IMR-90 (cell line): ENCODE measurements at regions of chr6 and their contacts with region 1.

Region 1: GRCh38 chr6:167907837-167908681 is 81.3 kb downstream of the AFDN start:
- DNase-seq: peak; percentile 28
- ATAC-seq: peak; percentile 72
- H3K4me3 ChIP-seq: no peak overlapping the region
- H3K27ac ChIP-seq: no peak overlapping the region
- H3K4me1 ChIP-seq: no peaks in the 10 kb centered on the region
- H3K27me3 ChIP-seq: no peaks in the 10 kb centered on the region
- CTCF ChIP-seq: peak; percentile 48
- POLR2A ChIP-seq: no peak
- RAD21 ChIP-seq: peak; percentile 58

Region 2: DNA sequence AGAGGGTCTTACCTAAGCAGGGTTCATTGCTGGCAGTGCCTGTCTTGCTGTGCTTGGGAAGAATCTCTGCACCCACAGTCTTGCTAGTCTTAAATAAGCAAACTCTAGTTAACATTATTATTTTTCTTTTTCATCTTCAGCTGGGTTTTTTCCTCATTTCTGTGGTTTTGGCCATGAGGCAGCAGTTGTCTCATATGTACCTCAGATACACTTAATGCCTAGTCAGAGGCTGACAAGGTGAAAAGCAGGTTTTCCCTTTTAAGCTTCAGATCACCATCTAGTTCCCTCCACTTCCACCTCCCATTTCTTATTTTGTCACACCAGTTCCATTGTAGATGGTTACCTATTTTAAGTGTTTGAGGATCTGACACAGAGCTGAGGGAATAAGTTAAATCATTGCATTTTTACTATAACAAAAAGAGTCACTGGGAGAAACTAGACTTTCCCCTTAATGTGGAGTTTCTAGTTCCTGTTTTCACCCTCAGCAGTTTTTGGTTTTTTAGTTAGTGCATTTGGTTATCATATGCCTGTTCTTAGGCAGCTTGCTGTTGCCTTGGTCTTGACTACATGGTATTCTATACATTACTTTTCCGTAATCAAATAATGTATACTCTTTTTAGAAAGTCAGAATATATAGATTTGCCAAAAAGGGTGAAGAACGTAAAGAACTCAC is 35.4 kb before region 1 on chr6:
- CTCF ChIA-PET with region 1: no interaction called
- POLR2A ChIA-PET with region 1: no interaction called
- dilution Hi-C with region 1: no loop called
- in situ Hi-C with region 1: no loop called
- intact Hi-C with region 1: no loop called
- DNase-seq: peak; percentile 47
- ATAC-seq: no peak
- H3K4me3 ChIP-seq: no peak overlapping the region
- H3K27ac ChIP-seq: no peak overlapping the region
- H3K4me1 ChIP-seq: no peaks in the 10 kb centered on the region
- H3K27me3 ChIP-seq: no peaks in the 10 kb centered on the region
- CTCF ChIP-seq: no peak
- POLR2A ChIP-seq: no peak
- RAD21 ChIP-seq: no peak

Region 3: GRCh38 chr6:168050881-168051586 is 143.0 kb after region 1 on chr6:
- CTCF ChIA-PET with region 1: no interaction called
- POLR2A ChIA-PET with region 1: no interaction called
- dilution Hi-C with region 1: no loop called
- in situ Hi-C with region 1: no loop called
- intact Hi-C with region 1: loop called (anchors 5 kb)
- DNase-seq: no peak
- ATAC-seq: no peak
- H3K4me3 ChIP-seq: no peak overlapping the region
- H3K27ac ChIP-seq: no peak overlapping the region
- H3K4me1 ChIP-seq: peaks cover 6% of the 10 kb centered on the region; the same call in 1 of the 2 replicates
- H3K27me3 ChIP-seq: no peaks in the 10 kb centered on the region; the same call in 1 of the 2 replicates
- CTCF ChIP-seq: 0 out of 2 replicates have a peak, but pooled peaks have one; percentile 22
- POLR2A ChIP-seq: no peak
- RAD21 ChIP-seq: peak; percentile 37

Region 4: DNA sequence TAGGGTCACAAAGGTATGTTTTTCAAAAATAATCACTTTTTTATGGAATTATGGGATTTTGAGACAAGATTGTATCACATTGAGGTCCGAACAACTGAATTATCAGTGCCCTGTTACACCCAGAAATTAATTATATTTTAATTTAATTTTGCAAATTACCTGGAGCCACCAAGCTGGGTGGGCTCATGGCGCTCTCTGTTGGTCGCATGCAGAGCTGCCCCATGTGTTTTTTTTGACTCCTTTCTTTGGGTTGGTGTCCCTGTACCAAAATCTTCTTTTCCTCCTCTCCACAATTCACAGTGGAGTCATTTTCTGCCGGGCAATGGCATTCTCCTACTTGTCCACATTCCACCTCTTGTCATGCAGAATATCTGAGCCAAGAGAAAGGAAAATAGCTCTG is 209.9 kb after region 1 on chr6:
- CTCF ChIA-PET with region 1: interaction called, 4 read pairs
- POLR2A ChIA-PET with region 1: no interaction called
- dilution Hi-C with region 1: no loop called
- in situ Hi-C with region 1: no loop called
- intact Hi-C with region 1: loop called (anchors 1 kb)
- DNase-seq: no peak
- ATAC-seq: no peak
- H3K4me3 ChIP-seq: no peak overlapping the region
- H3K27ac ChIP-seq: no peak overlapping the region
- H3K4me1 ChIP-seq: no peaks in the 10 kb centered on the region
- H3K27me3 ChIP-seq: peaks cover 3% of the 10 kb centered on the region; the same call in 1 of the 2 replicates
- CTCF ChIP-seq: peak; percentile 40
- POLR2A ChIP-seq: no peak
- RAD21 ChIP-seq: peak; percentile 32; the same call in 1 of the 2 replicates

Region 5: GRCh38 chr6:168132531-168133167 is 224.6 kb after region 1 on chr6:
- CTCF ChIA-PET with region 1: interaction called, 10 read pairs
- POLR2A ChIA-PET with region 1: no interaction called
- dilution Hi-C with region 1: no loop called
- in situ Hi-C with region 1: no loop called
- intact Hi-C with region 1: loop called (anchors 1 kb)
- DNase-seq: peak; percentile 80
- ATAC-seq: peak; percentile 85
- H3K4me3 ChIP-seq: no peak overlapping the region
- H3K27ac ChIP-seq: no peak overlapping the region
- H3K4me1 ChIP-seq: peaks cover 2% of the 10 kb centered on the region; the same call in 1 of the 2 replicates
- H3K27me3 ChIP-seq: no peaks in the 10 kb centered on the region; the same call in 1 of the 2 replicates
- CTCF ChIP-seq: peak; percentile 41
- POLR2A ChIP-seq: no peak
- RAD21 ChIP-seq: peak; percentile 49

Region 6: DNA sequence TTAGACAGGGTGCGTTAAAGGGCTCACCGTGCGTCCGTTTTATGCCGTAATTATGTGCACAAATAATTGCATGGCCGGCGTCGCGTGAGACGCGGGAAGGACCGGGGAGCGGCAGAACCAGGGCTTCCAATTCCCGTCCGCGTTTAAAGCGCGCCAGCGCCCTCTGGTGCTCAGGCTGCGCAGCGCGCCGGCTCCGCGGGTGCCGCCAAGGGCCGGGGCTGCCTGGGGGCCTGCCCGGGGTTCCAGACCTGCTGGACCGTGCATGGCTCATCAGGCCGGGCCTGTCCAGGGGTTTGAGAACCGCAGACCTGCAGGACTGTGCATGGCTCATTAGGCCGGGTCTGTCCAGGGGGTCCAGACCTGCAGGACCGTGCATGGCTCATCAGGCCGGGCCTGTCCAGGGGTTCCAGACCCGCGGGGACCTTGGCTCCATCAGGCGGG is 976.6 kb after region 1 on chr6:
- CTCF ChIA-PET with region 1: no interaction called
- POLR2A ChIA-PET with region 1: no interaction called
- dilution Hi-C with region 1: no loop called
- in situ Hi-C with region 1: loop called (anchors 25 kb)
- intact Hi-C with region 1: loop called (anchors 1 kb)
- DNase-seq: peak; percentile 5
- ATAC-seq: peak; percentile 87
- H3K4me3 ChIP-seq: no peak overlapping the region
- H3K27ac ChIP-seq: no peak overlapping the region
- H3K4me1 ChIP-seq: no peaks in the 10 kb centered on the region
- H3K27me3 ChIP-seq: no peaks in the 10 kb centered on the region; the same call in 1 of the 2 replicates
- CTCF ChIP-seq: peak; percentile 53
- POLR2A ChIP-seq: no peak
- RAD21 ChIP-seq: peak; percentile 59